ENCODE measurements at regions of chr7 and their contacts with region 1.

Region 1: GRCh38 chr7:83655951-83656556 is 7.1 kb upstream of the SEMA3E start:
- DNase-seq: peak in 1 of 4 donors; percentile 59
- ATAC-seq: peak; percentile 85
- H3K4me3 ChIP-seq: no peak overlapping the region
- H3K27ac ChIP-seq: no peak overlapping the region
- H3K4me1 ChIP-seq: no peaks in the 10 kb centered on the region
- H3K27me3 ChIP-seq: no peaks in the 10 kb centered on the region
- CTCF ChIP-seq: peak in 1 of 2 donors; percentile 56

Region 2: GRCh38 chr7:82605247-82605872 is 1050.7 kb before region 1 on chr7:
- intact Hi-C with region 1: no loop called
- DNase-seq: peak in 2 of 4 donors; percentile 16 to 38
- ATAC-seq: peak; percentile 62
- H3K4me3 ChIP-seq: no peak overlapping the region
- H3K27ac ChIP-seq: no peak overlapping the region
- H3K4me1 ChIP-seq: no peaks in the 10 kb centered on the region
- H3K27me3 ChIP-seq: no peaks in the 10 kb centered on the region
- CTCF ChIP-seq: peak; percentile 35 to 58

Region 3: GRCh38 chr7:83410989-83411591 is 245.0 kb before region 1 on chr7:
- intact Hi-C with region 1: loop called in 1 of 2 experiments (anchors 5 kb)
- DNase-seq: peak in 2 of 4 donors; percentile 45 to 73
- ATAC-seq: peak; percentile 58
- H3K4me3 ChIP-seq: no peak overlapping the region
- H3K27ac ChIP-seq: no peak overlapping the region
- H3K4me1 ChIP-seq: no peaks in the 10 kb centered on the region
- H3K27me3 ChIP-seq: no peaks in the 10 kb centered on the region
- CTCF ChIP-seq: peak; percentile 13 to 50

Measured in left lung (tissue), 14 donors.